B cell (primary cell): ENCODE measurements at regions of chr13 and their contacts with region 1.

Region 1: DNA sequence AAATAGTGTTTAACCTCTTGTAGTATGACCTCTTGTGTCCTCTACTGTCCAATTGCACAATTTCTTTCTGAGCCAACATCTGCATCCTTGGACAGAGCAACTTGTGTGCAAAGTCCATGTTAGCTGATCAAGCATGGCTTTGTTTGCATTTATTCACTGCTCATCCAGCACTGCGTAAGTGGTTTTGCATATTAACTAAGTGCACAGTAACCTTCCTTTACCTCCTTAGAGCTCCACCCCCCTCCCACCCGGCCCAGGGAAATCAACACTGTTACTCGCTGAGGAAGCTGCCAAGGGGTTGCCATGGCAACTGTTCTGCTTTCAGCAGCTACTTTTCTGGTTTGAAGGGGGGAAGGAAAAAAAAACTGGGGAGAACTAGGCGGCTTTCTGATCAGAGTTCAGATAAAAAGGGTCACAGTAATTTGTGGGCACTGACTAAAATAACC is 153.5 kb upstream of the KLF12 start:
- DNase-seq: peak; percentile 96
- ATAC-seq: peak; percentile 53
- H3K4me3 ChIP-seq: peak overlapping the region; percentile 43 to 77 (median 58)
- H3K4me3 Mint-ChIP-seq: peak overlapping the region; percentile 88
- H3K27ac ChIP-seq: peak overlapping the region; percentile 92 to 93
- H3K27ac Mint-ChIP-seq: peak overlapping the region; percentile 92
- H3K4me1 ChIP-seq: peaks cover 39 to 44% of the 10 kb centered on the region in 2 donors
- H3K4me1 Mint-ChIP-seq: peaks cover 51% of the 10 kb centered on the region
- H3K27me3 ChIP-seq: no peaks in the 10 kb centered on the region
- H3K27me3 Mint-ChIP-seq: no peaks in the 10 kb centered on the region
- CTCF ChIP-seq: no peak

Region 2: DNA sequence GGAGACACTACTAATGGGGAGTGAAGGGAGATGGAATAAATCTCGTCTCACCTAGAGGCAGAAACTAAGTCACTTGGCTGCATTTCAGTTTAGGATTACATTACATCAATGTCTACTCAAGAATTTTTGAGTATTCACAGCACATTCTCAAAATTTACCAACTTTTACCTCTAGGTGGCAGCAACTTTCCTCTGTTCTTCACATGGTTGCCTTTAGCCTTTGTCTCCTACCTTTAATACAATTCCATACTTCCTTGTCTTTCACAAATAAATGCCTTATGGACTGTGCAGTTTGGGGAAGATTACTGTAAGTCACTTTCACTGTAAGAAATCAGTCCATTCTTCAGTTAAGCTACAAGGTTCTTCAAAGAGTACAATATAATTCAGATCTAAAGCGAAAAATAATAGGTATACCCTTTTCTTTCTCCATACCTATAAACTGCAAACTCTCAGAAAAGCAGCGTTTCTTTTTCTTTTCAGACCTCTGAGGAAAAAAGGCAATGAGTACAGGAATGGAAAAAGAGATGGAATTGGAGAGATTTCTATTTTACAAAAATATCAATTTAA is 532.9 kb before region 1 on chr13:
- CTCF ChIA-PET with region 1: interaction called, 34 read pairs
- POLR2A ChIA-PET with region 1: no interaction called
- intact Hi-C with region 1: loop called (anchors 1 kb)
- DNase-seq: peak; percentile 70
- ATAC-seq: no peak
- H3K4me3 ChIP-seq: no peak overlapping the region
- H3K4me3 Mint-ChIP-seq: no peak overlapping the region
- H3K27ac ChIP-seq: no peak overlapping the region
- H3K27ac Mint-ChIP-seq: peak overlapping the region; percentile 23
- H3K4me1 ChIP-seq: no peaks in the 10 kb centered on the region
- H3K4me1 Mint-ChIP-seq: peaks cover 2% of the 10 kb centered on the region
- H3K27me3 ChIP-seq: no peaks in the 10 kb centered on the region
- H3K27me3 Mint-ChIP-seq: no peaks in the 10 kb centered on the region
- CTCF ChIP-seq: peak; percentile 89

Region 3: DNA sequence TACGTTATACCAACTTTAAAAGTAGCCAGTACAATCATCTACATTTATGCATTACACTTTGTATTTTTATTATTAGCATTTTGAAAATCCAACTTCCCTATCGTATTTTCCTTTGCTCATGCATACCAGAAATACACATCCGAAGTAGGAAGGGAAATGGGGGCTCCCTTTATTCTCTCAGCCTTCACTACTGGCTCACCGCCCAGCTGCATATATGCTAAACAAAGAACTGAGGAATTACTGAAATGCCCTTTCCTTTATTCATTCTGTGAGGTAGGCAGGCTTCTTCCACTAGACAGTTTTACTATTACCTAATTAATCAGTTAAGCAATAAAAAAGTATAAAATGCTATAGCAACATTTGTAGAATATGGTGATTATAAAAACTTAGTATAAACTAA is 445.1 kb before region 1 on chr13:
- CTCF ChIA-PET with region 1: interaction called, 160 read pairs
- POLR2A ChIA-PET with region 1: no interaction called
- intact Hi-C with region 1: no loop called
- DNase-seq: no peak
- ATAC-seq: no peak
- H3K4me3 ChIP-seq: no peak overlapping the region
- H3K4me3 Mint-ChIP-seq: no peak overlapping the region
- H3K27ac ChIP-seq: no peak overlapping the region
- H3K27ac Mint-ChIP-seq: no peak overlapping the region
- H3K4me1 ChIP-seq: no peaks in the 10 kb centered on the region
- H3K4me1 Mint-ChIP-seq: peaks cover 11% of the 10 kb centered on the region
- H3K27me3 ChIP-seq: no peaks in the 10 kb centered on the region
- H3K27me3 Mint-ChIP-seq: no peaks in the 10 kb centered on the region
- CTCF ChIP-seq: no peak

Region 4: DNA sequence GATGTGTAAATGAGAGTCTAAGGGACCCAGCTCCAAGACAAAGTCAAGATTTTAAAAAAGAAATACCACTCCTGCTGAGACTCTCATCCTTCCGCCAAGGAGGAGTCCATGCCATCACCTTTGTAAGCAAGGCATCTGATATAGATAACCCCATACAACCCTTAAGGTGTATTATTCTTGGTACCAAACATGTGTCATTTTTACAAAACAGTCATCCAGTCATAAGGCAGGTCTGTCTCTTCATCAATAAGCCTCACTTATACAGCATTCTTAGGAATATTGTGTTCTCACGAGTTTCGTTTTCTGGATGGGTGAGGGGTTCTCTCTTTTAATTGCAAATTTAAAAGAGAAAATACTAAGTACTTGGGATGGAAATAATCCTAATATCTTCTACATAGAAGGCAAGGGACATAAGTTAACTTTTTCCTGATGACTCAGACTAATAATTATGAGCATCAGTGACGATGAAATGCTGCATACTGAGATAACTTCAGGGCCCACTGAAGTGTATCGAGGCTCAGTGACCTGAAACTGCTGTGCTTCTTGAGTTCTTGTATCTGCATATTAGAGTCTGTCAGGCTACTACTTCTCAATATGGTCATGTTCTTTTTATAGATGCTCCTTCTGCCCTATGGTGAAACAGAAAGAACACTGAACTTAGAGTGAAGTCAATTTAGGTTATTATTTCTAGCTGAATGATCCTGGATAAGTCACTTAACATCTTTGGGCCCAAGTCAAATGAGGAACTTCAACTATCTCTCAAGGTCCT is 320.2 kb before region 1 on chr13:
- CTCF ChIA-PET with region 1: interaction called, 4 read pairs
- POLR2A ChIA-PET with region 1: no interaction called
- intact Hi-C with region 1: loop called (anchors 5 kb)
- DNase-seq: peak; percentile 80
- ATAC-seq: peak; percentile 91
- H3K4me3 ChIP-seq: no peak overlapping the region
- H3K4me3 Mint-ChIP-seq: peak overlapping the region; percentile 44
- H3K27ac ChIP-seq: peak overlapping the region; percentile 47 to 48
- H3K27ac Mint-ChIP-seq: peak overlapping the region; percentile 76
- H3K4me1 ChIP-seq: peaks cover 23 to 28% of the 10 kb centered on the region in 2 donors
- H3K4me1 Mint-ChIP-seq: peaks cover 55% of the 10 kb centered on the region
- H3K27me3 ChIP-seq: no peaks in the 10 kb centered on the region
- H3K27me3 Mint-ChIP-seq: no peaks in the 10 kb centered on the region
- CTCF ChIP-seq: no peak

Region 5: GRCh38 chr13:74133657-74134201 is 154.0 kb before region 1 on chr13:
- CTCF ChIA-PET with region 1: interaction called, 34 read pairs
- POLR2A ChIA-PET with region 1: interaction called, 35 read pairs
- intact Hi-C with region 1: loop called (anchors 1 kb)
- DNase-seq: peak; percentile 97
- ATAC-seq: peak; percentile 53
- H3K4me3 ChIP-seq: peak overlapping the region; percentile 78 to 91 (median 81)
- H3K4me3 Mint-ChIP-seq: peak overlapping the region; percentile 99
- H3K27ac ChIP-seq: peak overlapping the region; percentile 87 to 95
- H3K27ac Mint-ChIP-seq: peak overlapping the region; percentile 100
- H3K4me1 ChIP-seq: peaks cover 33 to 35% of the 10 kb centered on the region in 2 donors
- H3K4me1 Mint-ChIP-seq: peaks cover 39% of the 10 kb centered on the region
- H3K27me3 ChIP-seq: no peaks in the 10 kb centered on the region
- H3K27me3 Mint-ChIP-seq: no peaks in the 10 kb centered on the region
- CTCF ChIP-seq: no peak